CD4-positive, alpha-beta T cell (primary cell): ENCODE measurements at regions of chr10 and their contacts with region 1.

Region 1: DNA sequence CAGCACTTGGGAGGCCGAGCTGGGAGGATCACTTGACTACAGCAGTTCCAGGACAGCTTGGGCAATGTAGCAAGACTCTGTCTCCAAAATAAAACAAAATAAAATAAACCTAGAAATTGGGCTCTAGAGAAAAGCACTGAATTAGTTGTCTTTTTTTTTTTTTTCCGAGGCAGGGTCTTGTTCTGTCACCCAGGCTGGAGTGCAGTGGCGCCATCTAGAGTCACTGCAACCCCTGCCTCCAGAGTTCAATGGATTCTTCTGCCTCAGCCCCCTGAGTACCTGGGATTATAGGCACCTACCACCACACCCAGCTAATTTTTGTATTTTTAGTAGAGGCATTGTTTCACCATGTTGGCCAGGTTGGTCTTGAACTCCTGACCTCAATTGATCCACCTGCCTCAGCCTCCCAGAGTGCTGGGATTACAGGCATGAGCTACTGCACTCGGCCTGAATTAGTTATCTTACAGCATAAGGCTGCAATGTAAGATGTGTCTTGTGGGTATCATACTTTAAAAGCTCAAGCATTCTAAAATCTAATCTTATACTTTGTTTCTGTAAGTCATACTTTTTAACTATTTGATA is 12.8 kb downstream of the MEIG1 start:
- DNase-seq: peak; percentile 31 to 76 (median 44)
- ATAC-seq: peak; percentile 55
- H3K4me3 ChIP-seq: no peak overlapping the region
- H3K4me3 Mint-ChIP-seq: no peak overlapping the region
- H3K27ac ChIP-seq: no peak overlapping the region
- H3K27ac Mint-ChIP-seq: no peak overlapping the region
- H3K4me1 ChIP-seq: peaks cover 3% of the 10 kb centered on the region
- H3K4me1 Mint-ChIP-seq: peaks cover 5% of the 10 kb centered on the region
- H3K27me3 ChIP-seq: peaks cover 0 to 6% of the 10 kb centered on the region in 2 experiments
- H3K27me3 Mint-ChIP-seq: peaks cover 31% of the 10 kb centered on the region
- CTCF ChIP-seq: peak; percentile 70

Region 2: DNA sequence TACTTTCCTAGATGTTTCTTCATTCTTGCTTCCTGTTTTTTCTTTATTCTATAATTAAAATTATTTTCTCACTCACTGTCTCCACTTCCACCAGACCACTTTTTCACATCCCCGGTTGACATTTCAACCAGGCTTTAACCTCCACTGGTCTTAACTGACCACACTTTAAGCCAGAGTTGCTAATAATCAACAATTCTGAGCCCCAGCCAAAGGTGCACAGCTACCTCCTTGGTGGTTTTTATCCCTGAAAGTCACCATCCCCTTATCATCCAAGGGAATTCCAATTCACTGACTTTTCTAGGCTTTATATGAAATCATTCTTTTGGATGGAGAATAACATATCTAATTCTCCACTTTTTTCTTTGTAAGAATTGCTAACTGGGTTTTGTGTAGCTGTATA is 780.1 kb before region 1 on chr10:
- CTCF ChIA-PET with region 1: no interaction called
- POLR2A ChIA-PET with region 1: no interaction called
- intact Hi-C with region 1: loop called in 1 of 2 experiments (anchors 5 kb)
- DNase-seq: no peak
- ATAC-seq: no peak
- H3K4me3 ChIP-seq: no peak overlapping the region
- H3K4me3 Mint-ChIP-seq: no peak overlapping the region
- H3K27ac ChIP-seq: no peak overlapping the region
- H3K27ac Mint-ChIP-seq: no peak overlapping the region
- H3K4me1 ChIP-seq: no peaks in the 10 kb centered on the region
- H3K4me1 Mint-ChIP-seq: no peaks in the 10 kb centered on the region
- H3K27me3 ChIP-seq: peaks cover 2 to 9% of the 10 kb centered on the region in 2 experiments
- H3K27me3 Mint-ChIP-seq: peaks cover 19% of the 10 kb centered on the region
- CTCF ChIP-seq: no peak

Region 3: DNA sequence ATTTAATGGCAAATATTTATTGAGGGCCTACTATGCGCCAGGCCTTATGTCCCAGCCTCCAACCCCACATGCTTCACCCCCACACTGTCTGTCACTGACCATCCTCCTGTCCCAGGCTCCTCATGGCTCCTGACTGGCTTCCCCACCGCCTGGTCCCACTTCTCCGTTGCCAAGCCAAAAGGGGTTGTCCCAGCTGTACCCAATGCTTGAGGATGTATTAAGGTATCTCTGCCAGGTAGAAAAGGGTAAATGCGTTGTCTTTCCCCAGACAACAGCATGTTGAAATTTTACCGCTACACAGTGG is 472.4 kb before region 1 on chr10:
- CTCF ChIA-PET with region 1: no interaction called
- POLR2A ChIA-PET with region 1: no interaction called
- intact Hi-C with region 1: loop called in 1 of 2 experiments (anchors 5 kb)
- DNase-seq: no peak
- ATAC-seq: no peak
- H3K4me3 ChIP-seq: no peak overlapping the region
- H3K4me3 Mint-ChIP-seq: no peak overlapping the region
- H3K27ac ChIP-seq: no peak overlapping the region
- H3K27ac Mint-ChIP-seq: no peak overlapping the region
- H3K4me1 ChIP-seq: peaks cover 9% of the 10 kb centered on the region
- H3K4me1 Mint-ChIP-seq: peaks cover 4% of the 10 kb centered on the region
- H3K27me3 ChIP-seq: no peaks in the 10 kb centered on the region
- H3K27me3 Mint-ChIP-seq: no peaks in the 10 kb centered on the region
- CTCF ChIP-seq: no peak

Region 4: DNA sequence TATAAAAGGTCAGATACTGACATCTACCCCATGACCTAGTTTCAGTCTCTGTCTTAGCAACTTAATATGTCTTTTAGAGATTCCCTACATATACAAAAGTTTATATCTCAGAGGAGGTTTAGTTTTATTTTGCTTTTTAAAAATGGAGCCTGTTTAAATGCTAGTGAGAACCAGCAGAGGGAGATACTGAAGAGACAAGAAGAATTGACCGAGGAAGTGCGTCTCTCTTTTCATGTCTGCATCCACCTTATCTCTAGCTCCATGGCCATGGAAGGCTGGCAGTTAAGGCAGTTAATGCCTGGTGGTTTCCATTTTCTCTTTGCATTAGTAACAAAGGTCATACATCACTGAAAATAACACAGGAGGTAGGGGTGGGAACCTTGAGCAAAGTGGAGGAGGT is 82.6 kb before region 1 on chr10:
- CTCF ChIA-PET with region 1: no interaction called
- POLR2A ChIA-PET with region 1: no interaction called
- intact Hi-C with region 1: loop called (anchors 5 kb)
- DNase-seq: peak in 3 of 14 experiments; percentile 28 to 49 (median 38)
- ATAC-seq: peak; percentile 63
- H3K4me3 ChIP-seq: no peak overlapping the region
- H3K4me3 Mint-ChIP-seq: no peak overlapping the region
- H3K27ac ChIP-seq: no peak overlapping the region
- H3K27ac Mint-ChIP-seq: no peak overlapping the region
- H3K4me1 ChIP-seq: no peaks in the 10 kb centered on the region
- H3K4me1 Mint-ChIP-seq: peaks cover 6% of the 10 kb centered on the region
- H3K27me3 ChIP-seq: no peaks in the 10 kb centered on the region
- H3K27me3 Mint-ChIP-seq: no peaks in the 10 kb centered on the region
- CTCF ChIP-seq: peak; percentile 33

Region 5: DNA sequence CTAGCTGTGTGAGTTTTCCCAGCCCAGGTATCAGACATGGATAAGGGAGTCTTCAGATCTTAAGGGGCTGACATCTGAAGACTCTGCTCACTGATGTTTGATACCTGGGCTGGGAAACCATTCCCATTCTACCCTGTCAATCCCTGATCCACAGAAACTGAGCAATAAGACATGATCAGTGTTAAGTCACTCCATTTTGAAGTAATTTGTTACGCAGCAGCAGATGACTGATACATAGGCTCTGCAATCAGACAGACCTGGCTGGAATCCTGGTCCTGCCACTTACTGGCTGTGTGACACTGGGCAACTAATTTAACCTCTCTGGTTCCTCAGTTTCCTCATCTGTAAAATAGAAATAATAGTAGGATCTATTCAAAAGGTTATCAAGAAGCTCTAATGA is 24.7 kb before region 1 on chr10:
- CTCF ChIA-PET with region 1: no interaction called
- POLR2A ChIA-PET with region 1: no interaction called
- intact Hi-C with region 1: no loop called
- DNase-seq: no peak
- ATAC-seq: no peak
- H3K4me3 ChIP-seq: no peak overlapping the region
- H3K4me3 Mint-ChIP-seq: no peak overlapping the region
- H3K27ac ChIP-seq: no peak overlapping the region
- H3K27ac Mint-ChIP-seq: no peak overlapping the region
- H3K4me1 ChIP-seq: peaks cover 29% of the 10 kb centered on the region
- H3K4me1 Mint-ChIP-seq: peaks cover 26% of the 10 kb centered on the region
- H3K27me3 ChIP-seq: no peaks in the 10 kb centered on the region
- H3K27me3 Mint-ChIP-seq: no peaks in the 10 kb centered on the region
- CTCF ChIP-seq: no peak